ENCODE measurements at regions of chr7 and their contacts with region 1.

Region 1: GRCh38 chr7:131513245-131514061 is 43.0 kb downstream of the PODXL start:
- DNase-seq: peak; percentile 92
- H3K4me3 ChIP-seq: peak overlapping the region in 1 of 2 experiments; percentile 21; a peak in 2 of 4 replicates
- H3K27ac ChIP-seq: peak overlapping the region; percentile 2 to 41; a peak in 2 of 4 replicates
- H3K4me1 ChIP-seq: peaks cover 4 to 7% of the 10 kb centered on the region in 2 experiments; a peak in 2 of 4 replicates
- H3K27me3 ChIP-seq: no peaks in the 10 kb centered on the region
- CTCF ChIP-seq: peak; percentile 100
- EP300 ChIP-seq: no peak
- RAD21 ChIP-seq: peak; percentile 89

Region 2: GRCh38 chr7:131071786-131072504 is 441.5 kb before region 1 on chr7:
- CTCF ChIA-PET with region 1: interaction called, 32 read pairs
- POLR2A ChIA-PET with region 1: interaction called, 3 read pairs
- DNase-seq: peak; percentile 37
- H3K4me3 ChIP-seq: peak overlapping the region; percentile 37 to 38; a peak in 3 of 4 replicates
- H3K27ac ChIP-seq: peak overlapping the region; percentile 89 to 91
- H3K4me1 ChIP-seq: peaks cover 12 to 34% of the 10 kb centered on the region in 2 experiments
- H3K27me3 ChIP-seq: no peaks in the 10 kb centered on the region
- CTCF ChIP-seq: peak; percentile 87
- EP300 ChIP-seq: no peak
- RAD21 ChIP-seq: peak; percentile 45

Region 3: GRCh38 chr7:131501422-131501821 is 12.0 kb before region 1 on chr7:
- CTCF ChIA-PET with region 1: interaction called, 91 read pairs
- POLR2A ChIA-PET with region 1: interaction called, 3 read pairs
- DNase-seq: no peak
- H3K4me3 ChIP-seq: no peak overlapping the region
- H3K27ac ChIP-seq: peak overlapping the region; percentile 32 to 89
- H3K4me1 ChIP-seq: peaks cover 20 to 31% of the 10 kb centered on the region in 2 experiments; a peak in 3 of 4 replicates
- H3K27me3 ChIP-seq: no peaks in the 10 kb centered on the region
- CTCF ChIP-seq: no peak
- EP300 ChIP-seq: no peak
- RAD21 ChIP-seq: no peak

Region 4: DNA sequence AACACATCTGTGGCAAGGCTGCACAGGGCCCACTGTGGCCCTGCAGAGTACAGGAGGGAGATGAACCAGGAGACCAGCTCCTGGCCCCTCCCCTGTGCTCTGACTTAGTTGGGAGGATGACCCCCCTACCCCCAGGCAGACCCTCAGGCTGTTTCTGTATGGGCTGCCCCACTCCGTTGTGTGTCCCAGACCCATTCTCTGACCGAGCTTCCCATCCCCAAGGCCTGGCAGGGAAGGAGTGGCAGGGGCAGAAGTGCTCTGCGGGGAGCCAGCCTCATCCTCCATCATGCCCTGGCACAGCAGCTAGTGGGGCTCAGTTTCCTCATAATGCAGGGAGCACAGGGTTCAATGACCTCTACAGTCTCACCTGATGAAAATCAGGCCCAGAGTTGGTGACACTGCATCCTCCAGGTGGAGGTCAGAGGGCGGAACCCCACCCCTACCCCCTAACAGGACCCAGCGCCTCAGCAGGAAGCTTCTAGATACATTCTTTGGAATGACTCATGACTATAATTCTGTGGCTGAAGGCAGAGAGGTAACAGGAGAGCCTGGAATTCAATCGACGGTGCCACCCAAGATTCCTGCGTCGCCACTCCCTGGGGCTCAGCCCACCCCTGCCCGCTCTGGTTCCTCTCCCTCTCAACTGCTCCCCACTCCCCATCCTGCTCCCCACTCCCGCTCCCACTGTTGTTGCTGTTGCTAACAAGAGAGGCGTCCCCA is 24.8 kb after region 1 on chr7:
- CTCF ChIA-PET with region 1: interaction called, 95 read pairs
- POLR2A ChIA-PET with region 1: no interaction called
- DNase-seq: no peak
- H3K4me3 ChIP-seq: no peak overlapping the region
- H3K27ac ChIP-seq: peak overlapping the region; percentile 64 to 76
- H3K4me1 ChIP-seq: peaks cover 27 to 34% of the 10 kb centered on the region in 2 experiments; a peak in 3 of 4 replicates
- H3K27me3 ChIP-seq: no peaks in the 10 kb centered on the region
- CTCF ChIP-seq: no peak
- EP300 ChIP-seq: peak in 1 of 2 experiments; percentile 66; a peak in 1 of 4 replicates
- RAD21 ChIP-seq: no peak

Region 5: GRCh38 chr7:131625817-131626372 is 112.4 kb after region 1 on chr7:
- CTCF ChIA-PET with region 1: interaction called, 11 read pairs
- POLR2A ChIA-PET with region 1: no interaction called
- DNase-seq: peak; percentile 56
- H3K4me3 ChIP-seq: no peak overlapping the region
- H3K27ac ChIP-seq: peak overlapping the region; percentile 39 to 93; a peak in 3 of 4 replicates
- H3K4me1 ChIP-seq: peaks cover 18 to 51% of the 10 kb centered on the region in 2 experiments; a peak in 3 of 4 replicates
- H3K27me3 ChIP-seq: no peaks in the 10 kb centered on the region
- CTCF ChIP-seq: peak; percentile 42
- EP300 ChIP-seq: peak in 1 of 2 experiments; percentile 97; a peak in 2 of 4 replicates
- RAD21 ChIP-seq: no peak

Region 6: GRCh38 chr7:131722371-131722770 is 208.9 kb after region 1 on chr7:
- CTCF ChIA-PET with region 1: no interaction called
- POLR2A ChIA-PET with region 1: no interaction called
- DNase-seq: no peak
- H3K4me3 ChIP-seq: no peak overlapping the region
- H3K27ac ChIP-seq: no peak overlapping the region
- H3K4me1 ChIP-seq: no peaks in the 10 kb centered on the region; a peak in 2 of 4 replicates
- H3K27me3 ChIP-seq: no peaks in the 10 kb centered on the region
- CTCF ChIP-seq: no peak
- EP300 ChIP-seq: no peak
- RAD21 ChIP-seq: no peak

Measured in SK-N-SH (cell line).